ENCODE measurements at regions of chr4 and their contacts with region 1.

Region 1: DNA sequence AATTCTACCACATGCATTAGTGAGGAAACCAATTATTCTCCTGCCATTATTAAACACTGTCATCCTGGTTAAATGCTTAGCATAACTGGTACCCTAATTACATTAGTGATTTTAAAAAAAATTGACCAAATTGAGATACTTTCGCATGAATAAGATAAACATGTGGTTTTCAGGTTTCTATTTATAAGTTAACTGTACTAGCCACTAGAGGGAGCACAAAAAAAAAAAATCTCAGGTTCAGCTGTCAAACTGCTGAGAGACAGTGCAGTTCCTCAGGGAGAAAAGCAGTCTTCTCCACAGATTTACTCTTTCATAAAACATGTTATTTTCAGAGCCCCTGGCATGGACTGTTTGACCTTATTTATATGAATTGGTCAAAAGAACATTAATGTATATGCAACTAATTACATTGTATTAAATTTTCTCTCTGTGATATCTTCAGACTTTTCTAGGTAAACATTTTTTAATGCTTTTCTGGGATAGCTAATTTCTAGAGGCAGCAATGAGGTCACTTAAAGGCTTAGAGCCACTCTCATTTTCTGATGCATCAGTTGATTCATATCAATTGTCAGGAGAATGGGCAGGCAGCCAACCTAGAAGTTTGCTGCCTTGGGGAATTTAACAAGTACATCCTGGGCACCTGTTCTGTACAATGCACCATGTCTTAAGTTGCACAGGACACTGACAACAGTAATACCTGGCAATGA is 167.5 kb downstream of the CDS1 start:
- DNase-seq: no peak
- H3K4me3 ChIP-seq: no peak overlapping the region
- H3K27ac ChIP-seq: no peak overlapping the region
- H3K4me1 ChIP-seq: no peaks in the 10 kb centered on the region
- H3K27me3 ChIP-seq: no peaks in the 10 kb centered on the region
- CTCF ChIP-seq: peak; percentile 52 to 68 (median 60)
- POLR2A ChIP-seq: no peak

Region 2: GRCh38 chr4:84177831-84178542 is 572.4 kb before region 1 on chr4:
- intact Hi-C with region 1: no loop called
- DNase-seq: no peak
- H3K4me3 ChIP-seq: no peak overlapping the region
- H3K27ac ChIP-seq: no peak overlapping the region
- H3K4me1 ChIP-seq: no peaks in the 10 kb centered on the region
- H3K27me3 ChIP-seq: no peaks in the 10 kb centered on the region
- CTCF ChIP-seq: no peak
- POLR2A ChIP-seq: no peak

Region 3: DNA sequence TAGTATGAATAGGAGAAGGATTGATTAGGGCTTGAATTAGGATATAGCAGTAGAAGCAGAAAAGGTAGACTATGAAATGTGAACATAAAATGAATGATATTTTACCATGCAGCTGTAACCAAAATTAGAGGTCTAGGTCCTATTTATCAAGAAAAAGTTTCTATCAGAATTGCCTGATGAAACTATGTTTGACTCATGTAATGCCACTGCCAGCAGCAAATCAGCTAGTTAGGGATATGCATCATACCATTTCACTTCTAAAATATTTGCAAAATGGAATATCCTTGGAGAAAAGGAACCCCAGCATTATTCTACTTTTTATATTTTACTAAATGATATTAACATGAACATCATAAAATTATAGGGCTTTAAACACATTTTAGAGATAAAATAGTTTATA is 27.6 kb after region 1 on chr4:
- intact Hi-C with region 1: no loop called
- DNase-seq: no peak
- H3K4me3 ChIP-seq: no peak overlapping the region
- H3K27ac ChIP-seq: no peak overlapping the region
- H3K4me1 ChIP-seq: no peaks in the 10 kb centered on the region
- H3K27me3 ChIP-seq: no peaks in the 10 kb centered on the region
- CTCF ChIP-seq: no peak
- POLR2A ChIP-seq: no peak

Region 4: GRCh38 chr4:84966383-84967242 is 216.2 kb after region 1 on chr4 and contains the start of gene WDFY3:
- intact Hi-C with region 1: loop called (anchors 5 kb)
- DNase-seq: peak; percentile 81 to 84
- H3K4me3 ChIP-seq: peak within 1 kb of the TSS; percentile 76 to 90
- H3K27ac ChIP-seq: peak within 1 kb of the TSS; percentile 96 to 97
- H3K4me1 ChIP-seq: no peaks in the 10 kb centered on the region
- H3K27me3 ChIP-seq: no peaks in the 10 kb centered on the region
- CTCF ChIP-seq: peak in 3 of 4 experiments; percentile 7 to 13 (median 9)
- POLR2A ChIP-seq: peak; percentile 59 to 83
- total RNA-seq, gene WDFY3: 35.9 to 146 (median 95.0) TPM

Measured in uterus (tissue), 4 donors.